AG04450 (cell line): ENCODE measurements at regions of chr16 and their contacts with region 1.

Region 1: DNA sequence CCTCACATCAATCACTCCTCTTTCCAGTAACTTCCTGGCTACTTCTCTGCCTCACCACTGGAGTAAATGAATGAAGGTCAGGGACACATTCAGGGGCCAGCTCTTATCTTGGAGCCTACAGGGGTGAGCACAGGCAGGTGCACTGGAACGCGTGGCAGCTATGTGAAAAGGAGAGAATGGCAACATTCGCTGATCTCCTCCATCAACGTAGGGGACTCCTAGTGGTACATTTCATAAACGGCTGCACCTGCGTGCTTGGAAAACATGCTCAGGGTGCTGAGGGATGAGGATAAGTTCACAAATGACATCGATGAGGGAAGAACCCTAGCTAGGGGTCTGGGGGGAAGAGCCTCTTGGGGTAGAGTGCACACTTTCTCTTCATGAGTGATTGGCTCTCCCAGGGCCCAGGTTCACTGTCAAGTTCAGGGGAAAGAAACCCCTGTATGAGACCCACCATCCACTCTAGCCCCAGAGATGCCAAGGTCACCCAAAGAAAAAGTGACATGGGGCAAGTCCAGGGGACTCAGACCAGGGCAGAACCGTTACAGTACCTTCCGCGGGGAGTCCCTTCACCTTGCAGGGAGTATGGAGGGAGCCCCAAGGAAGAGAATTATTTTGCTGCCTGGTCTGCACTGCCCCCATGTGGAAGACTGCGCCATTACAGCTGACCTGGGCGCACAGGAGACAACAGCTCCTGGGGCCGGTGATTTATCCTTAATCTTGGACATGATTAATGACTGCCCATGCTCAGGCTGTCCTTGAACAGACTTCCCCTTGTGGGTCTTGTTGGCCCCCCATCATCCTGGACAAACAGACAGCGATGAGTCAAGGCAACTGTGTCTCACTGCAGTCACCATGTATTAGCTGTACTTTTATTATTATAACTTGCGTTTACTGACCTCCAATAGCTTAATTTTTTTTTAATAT is 30.1 kb downstream of the VAC14 start:
- DNase-seq: no peak
- H3K4me3 ChIP-seq: no peak overlapping the region
- H3K27ac ChIP-seq: no peak overlapping the region
- H3K27me3 ChIP-seq: no peaks in the 10 kb centered on the region
- CTCF ChIP-seq: peak; percentile 97

Region 2: GRCh38 chr16:70490261-70490803 is 280.6 kb before region 1 on chr16:
- CTCF ChIA-PET with region 1: interaction called, 11 read pairs
- POLR2A ChIA-PET with region 1: no interaction called
- DNase-seq: no peak
- H3K4me3 ChIP-seq: no peak overlapping the region
- H3K27ac ChIP-seq: no peak overlapping the region
- H3K27me3 ChIP-seq: no peaks in the 10 kb centered on the region
- CTCF ChIP-seq: no peak

Region 3: GRCh38 chr16:70661918-70662641 is 108.8 kb before region 1 on chr16:
- CTCF ChIA-PET with region 1: interaction called, 17 read pairs
- POLR2A ChIA-PET with region 1: interaction called, 6 read pairs
- DNase-seq: no peak
- H3K4me3 ChIP-seq: no peak overlapping the region
- H3K27ac ChIP-seq: peak overlapping the region; percentile 11
- H3K27me3 ChIP-seq: no peaks in the 10 kb centered on the region
- CTCF ChIP-seq: no peak

Region 4: GRCh38 chr16:70685938-70686375 is 84.9 kb before region 1 on chr16 and contains the start of gene MTSS2:
- CTCF ChIA-PET with region 1: interaction called, 68 read pairs
- POLR2A ChIA-PET with region 1: interaction called, 3 read pairs
- DNase-seq: peak; percentile 68
- H3K4me3 ChIP-seq: peak within 1 kb of the TSS; percentile 82
- H3K27ac ChIP-seq: peak within 1 kb of the TSS; percentile 52
- H3K27me3 ChIP-seq: no peaks in the 10 kb centered on the region
- CTCF ChIP-seq: no peak
- polyA plus RNA-seq, gene MTSS2: 57.9 and 80.1 TPM in 2 replicates

Region 5: GRCh38 chr16:70737377-70738082 is 33.4 kb before region 1 on chr16:
- CTCF ChIA-PET with region 1: interaction called, 30 read pairs
- POLR2A ChIA-PET with region 1: no interaction called
- DNase-seq: peak; percentile 97
- H3K4me3 ChIP-seq: peak overlapping the region; percentile 5; the same call in 1 of the 2 replicates
- H3K27ac ChIP-seq: peak overlapping the region; percentile 99
- H3K27me3 ChIP-seq: no peaks in the 10 kb centered on the region
- CTCF ChIP-seq: no peak

Region 6: GRCh38 chr16:70759666-70760065 is 11.2 kb before region 1 on chr16:
- CTCF ChIA-PET with region 1: interaction called, 42 read pairs
- POLR2A ChIA-PET with region 1: interaction called, 8 read pairs
- DNase-seq: no peak
- H3K4me3 ChIP-seq: no peak overlapping the region
- H3K27ac ChIP-seq: peak overlapping the region; percentile 93
- H3K27me3 ChIP-seq: no peaks in the 10 kb centered on the region
- CTCF ChIP-seq: no peak